ENCODE measurements at regions of chr16 and their contacts with region 1.

Region 1: DNA sequence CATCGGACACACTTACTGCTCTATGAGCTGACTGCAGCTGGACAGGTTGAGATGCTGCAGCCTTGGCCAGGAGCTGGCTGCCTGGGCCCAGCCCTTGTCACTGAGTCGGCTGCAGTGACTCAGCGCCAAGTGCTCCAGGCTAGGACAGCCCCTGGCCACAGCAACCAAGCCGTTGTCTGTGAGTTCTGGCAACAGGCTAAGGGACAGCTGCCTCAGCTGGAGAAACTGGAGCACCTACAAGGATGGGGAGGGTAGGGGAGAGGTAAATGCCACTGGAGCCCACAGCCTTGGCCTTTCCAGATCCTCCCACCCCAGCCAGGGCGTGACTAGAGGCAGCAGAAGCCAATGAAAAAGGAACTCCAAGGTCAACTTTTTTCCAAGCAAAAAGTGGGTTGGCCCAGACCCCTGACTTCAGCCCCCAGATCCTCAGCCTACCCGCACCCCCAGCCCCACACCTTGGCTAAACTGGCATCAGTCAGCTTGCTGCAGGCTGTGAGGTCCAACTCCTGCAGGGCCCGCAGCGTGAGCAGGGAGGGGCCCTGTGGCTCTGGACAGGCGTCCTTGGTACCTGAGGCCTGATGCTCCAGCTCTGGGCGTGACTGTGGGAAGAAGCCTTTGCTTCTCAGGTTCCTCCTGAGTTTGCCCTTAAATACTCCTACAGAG is 9.1 kb downstream of the ELMO3 start:
- DNase-seq: no peak
- H3K4me3 Mint-ChIP-seq: no peak overlapping the region
- H3K27ac Mint-ChIP-seq: no peak overlapping the region
- H3K4me1 Mint-ChIP-seq: no peaks in the 10 kb centered on the region
- H3K27me3 Mint-ChIP-seq: no peaks in the 10 kb centered on the region

Region 2: DNA sequence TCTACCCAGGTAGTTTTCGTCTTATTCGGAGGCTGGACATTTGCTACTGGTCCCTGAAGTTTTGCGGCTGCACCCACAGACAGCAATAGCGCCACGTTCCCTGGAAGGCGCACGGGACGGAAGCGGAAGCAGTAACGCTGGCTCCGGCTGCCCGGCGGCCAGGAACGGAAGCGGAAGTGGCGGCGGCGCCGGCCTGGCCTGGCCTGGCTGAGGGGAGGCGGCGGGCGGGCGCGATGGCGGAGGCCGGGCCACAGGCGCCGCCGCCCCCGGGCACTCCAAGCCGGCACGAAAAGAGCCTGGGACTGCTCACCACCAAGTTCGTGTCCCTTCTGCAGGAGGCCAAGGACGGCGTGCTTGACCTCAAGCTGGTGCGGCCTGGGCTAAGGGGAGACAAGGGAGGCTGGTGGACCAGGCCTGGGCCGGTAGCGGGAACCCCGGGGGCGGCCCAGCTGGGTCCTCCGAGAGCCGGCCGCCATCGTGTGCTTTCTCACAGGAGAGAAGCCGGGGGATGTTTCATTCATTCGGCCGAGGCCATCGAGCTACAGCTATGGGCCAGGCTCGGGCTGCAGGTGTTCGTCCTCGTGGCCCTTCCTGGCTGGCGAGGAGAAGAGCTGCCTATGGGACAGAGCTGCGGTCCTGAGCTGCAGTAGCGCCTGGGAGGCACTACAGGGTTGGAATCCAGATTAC is 15.8 kb before region 1 on chr16 and contains the start of gene E2F4:
- CTCF ChIA-PET with region 1: interaction called, 6 read pairs
- POLR2A ChIA-PET with region 1: interaction called, 14 read pairs
- DNase-seq: peak; percentile 91
- H3K4me3 Mint-ChIP-seq: peak within 1 kb of the TSS; percentile 86
- H3K27ac Mint-ChIP-seq: peak within 1 kb of the TSS; percentile 83
- H3K4me1 Mint-ChIP-seq: peaks cover 50% of the 10 kb centered on the region
- H3K27me3 Mint-ChIP-seq: no peaks in the 10 kb centered on the region
- total RNA-seq, gene E2F4: 127 to 131 TPM

Region 3: GRCh38 chr16:67406111-67406890 is 198.3 kb after region 1 on chr16:
- CTCF ChIA-PET with region 1: no interaction called
- POLR2A ChIA-PET with region 1: no interaction called
- DNase-seq: no peak
- H3K4me3 Mint-ChIP-seq: no peak overlapping the region
- H3K27ac Mint-ChIP-seq: no peak overlapping the region
- H3K4me1 Mint-ChIP-seq: no peaks in the 10 kb centered on the region
- H3K27me3 Mint-ChIP-seq: peaks cover 14% of the 10 kb centered on the region

Measured in activated CD4-positive, alpha-beta memory T cell treated with anti-CD3 and anti-CD28 coated beads, Interleukin-2, amount 10 ng/mL, durations not matched to agents 7 days and 5 days (primary cell).